Activated B cell treated with CpG ODN at 0.5 μM for 24 hours (primary cell): ENCODE measurements at regions of chr20 and their contacts with region 1.

Region 1: GRCh38 chr20:23420943-23421931 is at the start of gene NAPB:
- DNase-seq: peak; percentile 92
- ATAC-seq: peak; percentile 99
- H3K4me3 Mint-ChIP-seq: peak within 1 kb of the TSS; percentile 82
- H3K27ac Mint-ChIP-seq: peak within 1 kb of the TSS; percentile 50
- H3K4me1 Mint-ChIP-seq: peaks cover 17% of the 10 kb centered on the region
- H3K27me3 Mint-ChIP-seq: peaks cover 13% of the 10 kb centered on the region
- CTCF ChIP-seq: no peak
- total RNA-seq, gene NAPB: 5.3 and 7.8 TPM in 2 replicates

Region 2: DNA sequence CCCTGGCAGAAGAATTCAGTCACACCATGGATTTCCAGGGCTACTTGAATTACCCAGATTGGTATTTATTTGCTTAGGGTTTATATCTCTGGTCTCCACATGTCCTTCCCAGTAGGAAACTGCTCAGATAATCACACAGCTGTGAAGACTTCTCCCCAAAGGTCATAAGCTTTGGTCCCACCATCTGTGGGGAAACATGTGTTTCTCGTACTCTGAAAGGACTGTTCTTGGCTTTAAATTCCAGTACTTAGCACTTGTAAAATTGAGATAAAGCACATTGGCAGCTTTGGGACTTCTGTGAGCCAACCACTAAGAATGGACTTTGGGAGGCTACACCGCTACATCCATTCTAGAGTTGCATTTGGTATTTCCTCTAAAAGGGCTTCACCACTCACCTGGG is 631.6 kb before region 1 on chr20:
- CTCF ChIA-PET with region 1: no interaction called
- POLR2A ChIA-PET with region 1: no interaction called
- intact Hi-C with region 1: no loop called
- DNase-seq: no peak
- ATAC-seq: no peak
- H3K4me3 Mint-ChIP-seq: no peak overlapping the region
- H3K27ac Mint-ChIP-seq: no peak overlapping the region
- H3K4me1 Mint-ChIP-seq: no peaks in the 10 kb centered on the region
- H3K27me3 Mint-ChIP-seq: peaks cover 5% of the 10 kb centered on the region
- CTCF ChIP-seq: no peak

Region 3: GRCh38 chr20:22962557-22963438 is 458.4 kb before region 1 on chr20:
- CTCF ChIA-PET with region 1: no interaction called
- POLR2A ChIA-PET with region 1: no interaction called
- intact Hi-C with region 1: no loop called
- DNase-seq: no peak
- ATAC-seq: no peak
- H3K4me3 Mint-ChIP-seq: no peak overlapping the region
- H3K27ac Mint-ChIP-seq: no peak overlapping the region
- H3K4me1 Mint-ChIP-seq: no peaks in the 10 kb centered on the region
- H3K27me3 Mint-ChIP-seq: peaks cover 6% of the 10 kb centered on the region
- CTCF ChIP-seq: no peak

Region 4: GRCh38 chr20:23331450-23332350 is 89.5 kb before region 1 on chr20:
- CTCF ChIA-PET with region 1: no interaction called
- POLR2A ChIA-PET with region 1: no interaction called
- intact Hi-C with region 1: no loop called
- DNase-seq: no peak
- ATAC-seq: peak; percentile 31
- H3K4me3 Mint-ChIP-seq: no peak overlapping the region
- H3K27ac Mint-ChIP-seq: peak overlapping the region; percentile 30
- H3K4me1 Mint-ChIP-seq: peaks cover 21% of the 10 kb centered on the region
- H3K27me3 Mint-ChIP-seq: no peaks in the 10 kb centered on the region
- CTCF ChIP-seq: no peak

Region 5: DNA sequence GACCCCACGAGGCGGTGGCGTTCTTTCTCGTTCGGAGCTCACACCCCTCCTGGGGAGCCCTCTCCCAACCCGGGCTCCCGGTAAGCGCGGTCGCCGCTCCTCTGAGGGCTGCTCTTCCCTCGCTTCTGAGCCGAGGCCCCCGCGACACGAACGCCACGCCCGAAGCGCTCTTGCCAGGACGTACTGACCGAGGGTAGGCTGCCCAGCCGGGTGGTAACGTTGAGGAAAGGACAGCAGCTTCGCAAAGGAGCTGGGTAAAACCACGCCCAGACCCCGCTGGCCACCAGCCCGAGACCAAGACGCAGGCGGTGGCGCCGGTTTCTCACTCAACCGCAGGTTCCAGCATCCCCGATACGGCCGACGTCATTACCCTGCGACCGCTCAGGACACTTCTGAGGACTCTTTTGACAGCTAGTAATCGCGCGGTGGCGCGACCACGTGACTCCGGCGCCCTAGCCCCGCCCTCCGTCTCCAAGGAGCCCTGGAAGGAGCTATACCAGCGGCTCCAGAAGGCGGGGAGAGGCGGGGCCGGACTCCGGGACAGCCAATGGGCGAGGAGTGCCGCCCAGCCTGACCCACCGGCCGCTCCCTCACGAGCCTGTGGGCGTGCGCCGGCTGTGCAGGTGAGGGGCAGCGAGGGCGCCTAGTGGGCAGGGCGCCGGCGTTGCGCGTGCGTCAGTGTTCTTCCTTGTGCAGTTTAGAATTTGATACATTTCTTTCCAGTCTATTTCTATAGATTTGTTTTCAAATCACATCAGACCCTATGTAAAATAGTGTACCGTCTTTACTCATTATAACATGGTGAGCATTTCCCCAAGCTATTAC is 63.3 kb before region 1 on chr20:
- CTCF ChIA-PET with region 1: interaction called, 6 read pairs
- POLR2A ChIA-PET with region 1: interaction called, 11 read pairs
- intact Hi-C with region 1: loop called (anchors 1 kb)
- DNase-seq: peak; percentile 100
- ATAC-seq: peak; percentile 80
- H3K4me3 Mint-ChIP-seq: peak overlapping the region; percentile 90
- H3K27ac Mint-ChIP-seq: peak overlapping the region; percentile 94
- H3K4me1 Mint-ChIP-seq: peaks cover 30% of the 10 kb centered on the region
- H3K27me3 Mint-ChIP-seq: no peaks in the 10 kb centered on the region
- CTCF ChIP-seq: no peak

Region 6: GRCh38 chr20:23366384-23366783 is 54.9 kb before region 1 on chr20:
- CTCF ChIA-PET with region 1: no interaction called
- POLR2A ChIA-PET with region 1: no interaction called
- intact Hi-C with region 1: loop called (anchors 1 kb)
- DNase-seq: no peak
- ATAC-seq: no peak
- H3K4me3 Mint-ChIP-seq: peak overlapping the region; percentile 50
- H3K27ac Mint-ChIP-seq: peak overlapping the region; percentile 43
- H3K4me1 Mint-ChIP-seq: peaks cover 50% of the 10 kb centered on the region
- H3K27me3 Mint-ChIP-seq: no peaks in the 10 kb centered on the region
- CTCF ChIP-seq: no peak

Region 7: GRCh38 chr20:23407781-23408464 is 13.3 kb before region 1 on chr20:
- CTCF ChIA-PET with region 1: interaction called, 4 read pairs
- POLR2A ChIA-PET with region 1: interaction called, 4 read pairs
- intact Hi-C with region 1: loop called (anchors 1 kb)
- DNase-seq: no peak
- ATAC-seq: peak; percentile 97
- H3K4me3 Mint-ChIP-seq: peak overlapping the region; percentile 28
- H3K27ac Mint-ChIP-seq: peak overlapping the region; percentile 79
- H3K4me1 Mint-ChIP-seq: peaks cover 23% of the 10 kb centered on the region
- H3K27me3 Mint-ChIP-seq: no peaks in the 10 kb centered on the region
- CTCF ChIP-seq: no peak

Region 8: GRCh38 chr20:23680146-23680545 is 258.9 kb after region 1 on chr20:
- CTCF ChIA-PET with region 1: no interaction called
- POLR2A ChIA-PET with region 1: no interaction called
- intact Hi-C with region 1: no loop called
- DNase-seq: no peak
- ATAC-seq: no peak
- H3K4me3 Mint-ChIP-seq: no peak overlapping the region
- H3K27ac Mint-ChIP-seq: no peak overlapping the region
- H3K4me1 Mint-ChIP-seq: no peaks in the 10 kb centered on the region
- H3K27me3 Mint-ChIP-seq: peaks cover 3% of the 10 kb centered on the region
- CTCF ChIP-seq: no peak